Lower leg skin (tissue), 4 donors: ENCODE measurements at regions of chr12 and their contacts with region 1.

Region 1: GRCh38 chr12:115257791-115258190 is 573.8 kb upstream of the TBX3 start:
- DNase-seq: no peak
- H3K4me3 ChIP-seq: no peak overlapping the region
- CTCF ChIP-seq: no peak
- POLR2A ChIP-seq: no peak

Region 2: GRCh38 chr12:114777052-114777451 is 480.7 kb before region 1 on chr12:
- intact Hi-C with region 1: no loop called
- DNase-seq: no peak
- H3K4me3 ChIP-seq: no peak overlapping the region
- CTCF ChIP-seq: no peak
- POLR2A ChIP-seq: no peak

Region 3: GRCh38 chr12:115817389-115817788 is 559.6 kb after region 1 on chr12:
- intact Hi-C with region 1: loop called (anchors 5 kb)
- DNase-seq: no peak
- H3K4me3 ChIP-seq: no peak overlapping the region
- CTCF ChIP-seq: no peak
- POLR2A ChIP-seq: no peak